ENCODE measurements at regions of chr3 and their contacts with region 1.

Region 1: GRCh38 chr3:134600685-134601463 is 49.9 kb downstream of the KY start:
- DNase-seq: peak in 8 of 9 donors; percentile 12 to 67 (median 54)
- ATAC-seq: peak; percentile 82
- H3K4me3 ChIP-seq: no peak overlapping the region
- H3K4me3 Mint-ChIP-seq: peak overlapping the region; percentile 12 to 79 (median 56)
- H3K27ac ChIP-seq: no peak overlapping the region
- H3K27ac Mint-ChIP-seq: peak overlapping the region in 1 of 9 donors; percentile 13
- H3K4me1 ChIP-seq: no peaks in the 10 kb centered on the region
- H3K4me1 Mint-ChIP-seq: peaks cover 0 to 12% (median 7%) of the 10 kb centered on the region in 7 donors
- H3K27me3 ChIP-seq: no peaks in the 10 kb centered on the region
- H3K27me3 Mint-ChIP-seq: peaks cover 7 to 24% (median 13%) of the 10 kb centered on the region in 5 donors

Region 2: GRCh38 chr3:134536781-134537180 is 64.1 kb before region 1 on chr3:
- CTCF ChIA-PET with region 1: no interaction called
- POLR2A ChIA-PET with region 1: no interaction called
- intact Hi-C with region 1: no loop called
- DNase-seq: no peak
- ATAC-seq: no peak
- H3K4me3 ChIP-seq: no peak overlapping the region
- H3K4me3 Mint-ChIP-seq: no peak overlapping the region
- H3K27ac ChIP-seq: no peak overlapping the region
- H3K27ac Mint-ChIP-seq: no peak overlapping the region
- H3K4me1 ChIP-seq: no peaks in the 10 kb centered on the region
- H3K4me1 Mint-ChIP-seq: peaks cover 0 to 11% (median 4%) of the 10 kb centered on the region in 7 donors
- H3K27me3 ChIP-seq: no peaks in the 10 kb centered on the region
- H3K27me3 Mint-ChIP-seq: no peaks in the 10 kb centered on the region

Region 3: DNA sequence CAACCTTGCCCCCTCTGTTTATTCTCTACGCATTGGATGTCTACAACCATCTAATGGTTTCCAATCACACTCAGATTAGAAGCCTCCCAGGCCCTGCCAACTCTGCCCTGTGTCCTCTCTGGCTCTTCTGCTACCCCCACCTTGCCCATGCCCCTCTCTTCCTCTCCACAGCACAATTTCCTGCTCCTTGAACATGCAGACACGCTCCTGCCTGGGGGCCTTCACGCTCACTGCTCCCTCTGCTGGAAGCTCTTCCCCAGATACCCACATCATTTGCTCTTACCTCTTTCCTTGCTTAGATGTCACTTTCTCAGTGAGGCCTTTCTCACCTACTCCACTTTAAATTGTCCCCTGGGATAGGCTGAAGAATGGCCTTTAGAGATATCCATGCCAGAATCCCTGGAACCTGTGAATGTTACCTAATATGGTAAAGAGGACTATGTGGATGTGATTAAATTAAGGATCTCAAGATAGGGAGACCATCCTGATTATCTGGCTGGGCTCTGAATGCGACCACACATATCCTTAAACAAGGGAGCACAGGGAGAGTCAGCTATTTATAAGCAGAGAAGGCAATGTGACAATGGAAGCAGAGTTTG is 40.1 kb after region 1 on chr3:
- CTCF ChIA-PET with region 1: no interaction called
- POLR2A ChIA-PET with region 1: no interaction called
- intact Hi-C with region 1: loop called in 1 of 2 experiments (anchors 2 kb)
- DNase-seq: no peak
- ATAC-seq: peak; percentile 38
- H3K4me3 ChIP-seq: no peak overlapping the region
- H3K4me3 Mint-ChIP-seq: no peak overlapping the region
- H3K27ac ChIP-seq: no peak overlapping the region
- H3K27ac Mint-ChIP-seq: no peak overlapping the region
- H3K4me1 ChIP-seq: no peaks in the 10 kb centered on the region
- H3K4me1 Mint-ChIP-seq: peaks cover 0 to 4% (median 0%) of the 10 kb centered on the region in 7 donors
- H3K27me3 ChIP-seq: no peaks in the 10 kb centered on the region
- H3K27me3 Mint-ChIP-seq: peaks cover 0 to 11% (median 0%) of the 10 kb centered on the region in 5 donors

Region 4: DNA sequence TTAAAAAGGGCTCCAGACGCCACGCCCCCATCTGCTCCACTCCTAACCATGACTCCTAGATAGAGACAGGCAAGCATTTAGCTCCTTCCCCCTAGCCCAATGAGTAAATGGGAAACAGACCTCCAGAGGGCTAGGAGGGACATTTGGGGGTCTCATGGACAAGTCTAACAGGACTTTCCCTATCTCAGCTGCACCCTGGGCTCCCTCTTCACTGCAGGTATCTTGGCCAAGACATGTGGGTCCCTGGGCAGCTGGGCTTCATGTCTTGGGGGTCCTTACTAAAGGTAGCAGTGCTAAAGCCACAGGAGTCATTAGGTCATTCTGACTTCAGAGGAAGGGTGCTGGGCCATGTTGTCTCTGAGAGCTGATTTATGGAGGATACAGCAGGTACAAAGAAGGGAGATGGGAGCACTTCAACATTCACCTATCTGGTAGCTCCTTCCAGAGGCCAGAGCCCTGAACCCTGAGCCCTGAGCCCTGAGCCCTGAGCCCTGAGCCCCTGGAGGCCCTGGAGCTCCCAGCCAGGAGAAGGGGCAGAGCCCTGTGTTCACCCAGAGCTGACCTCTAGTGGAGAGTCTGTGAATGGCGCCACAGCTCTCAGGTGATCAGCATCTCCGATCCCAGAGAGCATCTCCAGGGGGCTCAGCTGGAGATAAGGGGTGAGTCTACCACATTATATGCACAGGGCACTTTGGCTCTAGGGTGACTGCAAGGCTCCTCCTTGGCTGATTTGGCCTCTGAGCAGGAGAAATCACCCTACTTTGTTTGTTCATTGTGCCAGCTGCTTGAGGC is 154.1 kb after region 1 on chr3:
- CTCF ChIA-PET with region 1: no interaction called
- POLR2A ChIA-PET with region 1: no interaction called
- intact Hi-C with region 1: loop called in 1 of 2 experiments (anchors 2 kb)
- DNase-seq: peak in 1 of 9 donors; percentile 5
- ATAC-seq: no peak
- H3K4me3 ChIP-seq: no peak overlapping the region
- H3K4me3 Mint-ChIP-seq: no peak overlapping the region
- H3K27ac ChIP-seq: no peak overlapping the region
- H3K27ac Mint-ChIP-seq: no peak overlapping the region
- H3K4me1 ChIP-seq: no peaks in the 10 kb centered on the region
- H3K4me1 Mint-ChIP-seq: no peaks in the 10 kb centered on the region
- H3K27me3 ChIP-seq: no peaks in the 10 kb centered on the region
- H3K27me3 Mint-ChIP-seq: peaks cover 0 to 16% (median 7%) of the 10 kb centered on the region in 5 donors

Region 5: DNA sequence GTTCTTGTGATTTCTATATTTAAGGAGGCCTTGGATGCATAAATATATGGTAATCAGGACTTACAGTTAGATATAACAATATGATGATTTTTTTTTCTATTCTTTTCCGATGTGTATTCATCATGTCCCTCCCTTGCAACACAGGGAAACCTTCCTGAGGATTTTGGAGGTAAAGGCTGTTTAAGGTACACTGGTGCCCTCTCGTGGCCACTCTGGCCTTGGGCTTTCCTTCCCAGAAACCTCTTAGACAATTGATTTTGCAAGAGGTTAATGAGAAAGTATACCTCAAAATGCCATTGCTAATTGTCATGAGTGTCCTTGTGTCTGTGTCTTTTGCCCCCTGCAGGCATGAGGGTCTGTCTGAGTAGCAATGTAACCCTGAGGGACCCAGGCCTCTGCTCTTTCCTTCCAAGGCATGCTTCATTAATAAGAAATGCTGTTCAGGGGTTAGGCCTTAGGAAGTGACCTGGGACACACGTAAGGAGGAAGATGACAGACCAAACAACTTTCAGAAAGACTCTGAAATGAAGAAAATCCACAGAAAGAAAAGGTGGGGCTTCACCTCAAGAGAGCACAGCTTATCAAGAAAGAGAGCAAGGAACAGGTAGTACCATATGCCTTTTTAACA is 1294.3 kb after region 1 on chr3:
- CTCF ChIA-PET with region 1: no interaction called
- POLR2A ChIA-PET with region 1: no interaction called
- intact Hi-C with region 1: loop called in 1 of 2 experiments (anchors 1 kb)
- DNase-seq: peak in 4 of 9 donors; percentile 2 to 26 (median 8)
- ATAC-seq: no peak
- H3K4me3 ChIP-seq: no peak overlapping the region
- H3K4me3 Mint-ChIP-seq: no peak overlapping the region
- H3K27ac ChIP-seq: no peak overlapping the region
- H3K27ac Mint-ChIP-seq: no peak overlapping the region
- H3K4me1 ChIP-seq: no peaks in the 10 kb centered on the region
- H3K4me1 Mint-ChIP-seq: no peaks in the 10 kb centered on the region
- H3K27me3 ChIP-seq: no peaks in the 10 kb centered on the region
- H3K27me3 Mint-ChIP-seq: peaks cover 0 to 21% (median 5%) of the 10 kb centered on the region in 5 donors

Region 6: DNA sequence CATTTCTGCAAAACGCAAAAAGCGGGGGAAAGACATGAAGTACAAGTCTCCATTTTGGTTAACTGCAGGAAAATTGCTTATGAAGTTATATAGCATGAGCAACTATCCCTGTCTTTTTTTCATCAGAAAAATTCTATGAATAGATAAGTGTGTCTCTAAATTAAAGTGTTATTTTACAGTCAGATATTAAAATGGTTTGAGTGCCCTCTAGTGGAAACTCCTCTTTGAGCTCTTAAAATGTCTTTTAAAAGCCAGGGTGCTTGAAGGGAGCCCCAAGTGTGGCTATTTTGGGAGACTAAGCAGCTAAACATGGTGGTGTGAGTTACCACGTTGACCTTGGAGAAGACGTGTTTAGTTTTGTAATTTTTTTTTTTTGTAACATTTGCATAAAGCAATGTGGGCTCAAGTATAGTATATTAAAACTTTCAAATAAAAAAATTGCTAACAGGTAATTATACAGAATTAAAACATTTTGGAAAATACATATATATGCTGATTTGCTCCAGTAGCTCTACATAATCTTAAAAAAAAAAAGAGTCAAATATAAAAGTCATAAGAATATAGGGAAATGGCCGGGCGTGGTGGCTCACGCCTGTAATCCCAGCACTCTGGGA is 1441.8 kb after region 1 on chr3:
- CTCF ChIA-PET with region 1: interaction called, 3 read pairs
- POLR2A ChIA-PET with region 1: no interaction called
- intact Hi-C with region 1: loop called in 1 of 2 experiments (anchors 5 kb)
- DNase-seq: peak in 3 of 9 donors; percentile 2 to 14 (median 10)
- ATAC-seq: no peak
- H3K4me3 ChIP-seq: no peak overlapping the region
- H3K4me3 Mint-ChIP-seq: no peak overlapping the region
- H3K27ac ChIP-seq: no peak overlapping the region
- H3K27ac Mint-ChIP-seq: no peak overlapping the region
- H3K4me1 ChIP-seq: no peaks in the 10 kb centered on the region
- H3K4me1 Mint-ChIP-seq: no peaks in the 10 kb centered on the region
- H3K27me3 ChIP-seq: peaks cover 0 to 5% of the 10 kb centered on the region in 2 donors
- H3K27me3 Mint-ChIP-seq: peaks cover 5 to 25% (median 15%) of the 10 kb centered on the region in 5 donors